Endothelial cell of umbilical vein (primary cell): ENCODE measurements at regions of chr5 and their contacts with region 1.

Region 1: DNA sequence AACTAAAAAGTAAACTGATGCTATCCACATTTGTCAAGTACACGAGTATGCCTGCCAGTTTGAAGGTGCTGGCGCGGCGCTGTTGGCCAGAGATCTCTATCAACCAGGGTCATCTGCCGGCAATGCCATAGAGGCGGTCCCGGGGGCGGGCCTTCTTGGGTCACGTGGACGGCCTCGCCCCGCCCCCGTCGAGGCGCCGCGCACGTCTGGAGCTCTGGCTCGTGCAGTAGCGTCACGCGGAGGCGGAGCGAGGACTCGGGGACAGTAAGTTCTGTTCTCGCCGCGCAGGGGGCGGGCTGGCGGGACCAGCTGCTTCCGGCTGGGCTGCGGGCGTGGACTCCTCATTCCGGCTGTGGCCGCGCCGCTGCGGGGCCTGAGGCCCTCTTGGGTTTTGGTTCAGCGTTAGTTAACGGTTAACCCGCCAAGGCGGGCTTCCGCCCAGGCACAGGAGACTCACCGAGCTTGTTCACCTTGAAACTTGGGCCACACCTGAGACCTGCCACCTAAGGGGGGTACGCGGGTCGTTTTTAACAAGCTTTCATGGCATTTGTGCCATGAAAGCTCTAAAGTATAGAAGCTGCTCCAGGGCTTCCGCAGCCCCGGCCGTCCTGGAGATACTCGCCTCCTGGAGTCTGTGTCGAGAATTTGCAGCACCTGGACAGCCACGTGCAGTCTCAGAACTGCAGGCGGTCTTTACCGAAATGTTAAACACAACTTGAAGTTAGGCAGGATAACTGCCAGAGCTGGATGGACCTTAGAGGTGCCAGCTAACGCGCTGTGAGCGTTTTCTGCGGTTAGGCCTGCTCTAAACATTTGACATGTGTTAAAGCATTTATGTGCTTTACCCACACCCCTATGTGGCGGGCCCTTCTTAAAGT is at the start of gene RFESD:
- DNase-seq: peak; percentile 89
- H3K4me3 ChIP-seq: peak within 1 kb of the TSS; percentile 61 to 75 (median 67)
- H3K27ac ChIP-seq: peak within 1 kb of the TSS; percentile 91
- H3K4me1 ChIP-seq: peaks cover 9% of the 10 kb centered on the region
- H3K27me3 ChIP-seq: no peaks in the 10 kb centered on the region
- CTCF ChIP-seq: peak in 1 of 2 donors; percentile 2
- POLR2A ChIP-seq: peak; percentile 86
- total RNA-seq, gene RFESD: 1.1 and 2.0 TPM in 2 replicates

Region 2: GRCh38 chr5:95533106-95533690 is 113.6 kb before region 1 on chr5:
- CTCF ChIA-PET with region 1: no interaction called
- POLR2A ChIA-PET with region 1: no interaction called
- dilution Hi-C with region 1: no loop called
- intact Hi-C with region 1: no loop called
- DNase-seq: no peak
- H3K4me3 ChIP-seq: no peak overlapping the region
- H3K27ac ChIP-seq: no peak overlapping the region
- H3K4me1 ChIP-seq: no peaks in the 10 kb centered on the region
- H3K27me3 ChIP-seq: no peaks in the 10 kb centered on the region
- CTCF ChIP-seq: no peak
- POLR2A ChIP-seq: no peak

Region 3: DNA sequence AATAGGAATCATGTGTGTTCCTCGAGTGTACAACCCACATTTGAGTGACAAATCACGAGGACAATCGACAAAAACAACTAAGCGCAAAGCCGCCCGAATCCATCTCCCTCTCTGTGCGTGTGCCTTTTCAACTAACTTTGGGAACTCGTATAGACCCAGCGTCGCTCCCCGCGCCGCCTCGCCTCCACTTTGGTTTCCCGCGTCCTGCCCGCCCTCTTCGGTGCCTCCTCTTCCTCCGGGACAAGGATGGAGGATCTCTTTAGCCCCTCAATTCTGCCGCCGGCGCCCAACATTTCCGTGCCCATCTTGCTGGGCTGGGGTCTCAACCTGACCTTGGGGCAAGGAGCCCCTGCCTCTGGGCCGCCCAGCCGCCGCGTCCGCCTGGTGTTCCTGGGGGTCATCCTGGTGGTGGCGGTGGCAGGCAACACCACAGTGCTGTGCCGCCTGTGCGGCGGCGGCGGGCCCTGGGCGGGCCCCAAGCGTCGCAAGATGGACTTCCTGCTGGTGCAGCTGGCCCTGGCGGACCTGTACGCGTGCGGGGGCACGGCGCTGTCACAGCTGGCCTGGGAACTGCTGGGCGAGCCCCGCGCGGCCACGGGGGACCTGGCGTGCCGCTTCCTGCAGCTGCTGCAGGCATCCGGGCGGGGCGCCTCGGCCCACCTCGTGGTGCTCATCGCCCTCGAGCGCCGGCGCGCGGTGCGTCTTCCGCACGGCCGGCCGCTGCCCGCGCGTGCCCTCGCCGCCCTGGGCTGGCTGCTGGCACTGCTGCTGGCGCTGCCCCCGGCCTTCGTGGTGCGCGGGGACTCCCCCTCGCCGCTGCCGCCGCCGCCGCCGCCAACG is 26.5 kb before region 1 on chr5 and contains the start of gene GPR150:
- CTCF ChIA-PET with region 1: interaction called, 5 read pairs
- POLR2A ChIA-PET with region 1: no interaction called
- dilution Hi-C with region 1: no loop called
- intact Hi-C with region 1: loop called (anchors 1 kb)
- DNase-seq: peak; percentile 39
- H3K4me3 ChIP-seq: peak within 1 kb of the TSS; percentile 18 to 54 (median 53)
- H3K27ac ChIP-seq: peak within 1 kb of the TSS; percentile 44
- H3K4me1 ChIP-seq: peaks cover 23% of the 10 kb centered on the region
- H3K27me3 ChIP-seq: no peaks in the 10 kb centered on the region
- CTCF ChIP-seq: no peak
- POLR2A ChIP-seq: peak; percentile 31
- total RNA-seq, gene GPR150: 0.31 and 0.35 TPM in 2 replicates

Region 4: GRCh38 chr5:95664204-95664786 is 17.5 kb after region 1 on chr5:
- CTCF ChIA-PET with region 1: interaction called, 15 read pairs
- POLR2A ChIA-PET with region 1: no interaction called
- dilution Hi-C with region 1: no loop called
- intact Hi-C with region 1: no loop called
- DNase-seq: peak; percentile 74
- H3K4me3 ChIP-seq: no peak overlapping the region
- H3K27ac ChIP-seq: no peak overlapping the region
- H3K4me1 ChIP-seq: peaks cover 15% of the 10 kb centered on the region
- H3K27me3 ChIP-seq: no peaks in the 10 kb centered on the region
- CTCF ChIP-seq: peak; percentile 54 to 60
- POLR2A ChIP-seq: no peak

Region 5: DNA sequence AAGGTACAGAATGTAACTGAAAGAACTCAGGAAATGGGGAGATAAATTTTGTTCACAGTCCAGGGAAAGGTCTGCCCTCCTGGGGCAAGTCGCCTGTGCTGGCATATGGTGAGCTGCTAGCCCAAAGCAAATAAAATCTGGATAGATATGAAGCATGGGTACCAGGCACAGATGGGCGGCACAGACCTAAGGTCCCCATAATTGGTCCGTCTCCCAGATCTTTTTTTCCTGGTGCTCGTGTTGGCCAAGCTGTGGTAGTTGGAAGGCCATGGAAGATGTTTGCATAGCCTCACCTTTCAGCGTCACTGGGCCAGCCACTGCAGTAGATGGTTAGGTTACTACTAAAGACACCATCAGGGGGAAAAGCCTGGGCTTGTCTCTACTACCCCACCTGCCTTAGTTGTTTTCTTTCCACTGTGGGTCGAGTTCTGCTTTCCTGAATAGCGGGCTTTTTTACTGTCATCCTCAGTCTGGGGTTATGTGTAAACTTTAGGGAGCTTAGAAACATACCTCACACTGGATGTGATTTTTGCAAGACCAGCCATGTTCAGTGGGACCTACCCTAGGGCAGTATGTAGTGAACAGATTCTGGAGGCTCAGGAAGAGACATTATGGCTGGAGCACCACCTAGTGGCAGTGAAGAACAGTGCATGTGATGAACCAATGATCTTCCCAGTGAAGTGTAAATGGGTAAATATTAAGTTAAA is 199.9 kb after region 1 on chr5:
- CTCF ChIA-PET with region 1: interaction called, 58 read pairs
- POLR2A ChIA-PET with region 1: no interaction called
- dilution Hi-C with region 1: loop called (anchors 25 kb)
- intact Hi-C with region 1: loop called (anchors 1 kb)
- DNase-seq: peak; percentile 79
- H3K4me3 ChIP-seq: no peak overlapping the region
- H3K27ac ChIP-seq: no peak overlapping the region
- H3K4me1 ChIP-seq: no peaks in the 10 kb centered on the region
- H3K27me3 ChIP-seq: no peaks in the 10 kb centered on the region
- CTCF ChIP-seq: peak; percentile 80 to 88
- POLR2A ChIP-seq: no peak

Region 6: GRCh38 chr5:96595300-96596090 is 948.7 kb after region 1 on chr5:
- CTCF ChIA-PET with region 1: no interaction called
- POLR2A ChIA-PET with region 1: no interaction called
- dilution Hi-C with region 1: no loop called
- intact Hi-C with region 1: loop called (anchors 10 kb)
- DNase-seq: peak; percentile 80
- H3K4me3 ChIP-seq: no peak overlapping the region
- H3K27ac ChIP-seq: peak overlapping the region; percentile 79
- H3K4me1 ChIP-seq: peaks cover 79% of the 10 kb centered on the region
- H3K27me3 ChIP-seq: no peaks in the 10 kb centered on the region
- CTCF ChIP-seq: peak; percentile 19 to 56
- POLR2A ChIP-seq: no peak